ENCODE measurements at regions of chr5 and their contacts with region 1.

Region 1: GRCh38 chr5:154610321-154611154 is 132.5 kb upstream of the HAND1 start:
- DNase-seq: peak; percentile 62
- H3K4me3 ChIP-seq: peak overlapping the region in 2 of 3 experiments; percentile 19 to 20
- H3K27ac ChIP-seq: no peak overlapping the region
- H3K4me1 ChIP-seq: peaks cover 4% of the 10 kb centered on the region
- H3K27me3 ChIP-seq: peaks cover 22 to 39% of the 10 kb centered on the region in 2 experiments
- CTCF ChIP-seq: peak; percentile 83 to 91
- POLR2A ChIP-seq: no peak

Region 2: DNA sequence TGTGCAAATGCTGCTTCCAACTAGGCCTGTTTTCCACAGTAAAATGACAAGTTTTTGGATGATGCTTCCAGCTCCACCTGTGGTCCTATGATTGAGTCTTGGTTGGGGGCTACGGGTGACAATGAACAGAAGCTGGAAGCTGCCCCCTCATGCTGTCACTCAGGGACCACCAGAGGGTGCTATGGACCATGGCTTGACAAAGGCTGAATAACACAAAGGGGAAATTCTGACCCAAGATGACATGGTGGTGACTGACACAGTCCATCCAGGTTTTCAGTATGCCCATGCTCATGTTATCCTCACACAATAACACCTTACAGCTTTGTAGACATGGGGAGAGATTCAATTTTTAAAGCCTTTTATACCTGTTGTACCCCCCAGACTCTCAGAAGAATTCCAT is 188.7 kb before region 1 on chr5:
- CTCF ChIA-PET with region 1: interaction called, 9 read pairs
- POLR2A ChIA-PET with region 1: no interaction called
- dilution Hi-C with region 1: no loop called
- intact Hi-C with region 1: loop called (anchors 1 kb)
- DNase-seq: peak; percentile 33
- H3K4me3 ChIP-seq: no peak overlapping the region
- H3K27ac ChIP-seq: no peak overlapping the region
- H3K4me1 ChIP-seq: no peaks in the 10 kb centered on the region
- H3K27me3 ChIP-seq: no peaks in the 10 kb centered on the region
- CTCF ChIP-seq: peak; percentile 56 to 62
- POLR2A ChIP-seq: no peak

Region 3: DNA sequence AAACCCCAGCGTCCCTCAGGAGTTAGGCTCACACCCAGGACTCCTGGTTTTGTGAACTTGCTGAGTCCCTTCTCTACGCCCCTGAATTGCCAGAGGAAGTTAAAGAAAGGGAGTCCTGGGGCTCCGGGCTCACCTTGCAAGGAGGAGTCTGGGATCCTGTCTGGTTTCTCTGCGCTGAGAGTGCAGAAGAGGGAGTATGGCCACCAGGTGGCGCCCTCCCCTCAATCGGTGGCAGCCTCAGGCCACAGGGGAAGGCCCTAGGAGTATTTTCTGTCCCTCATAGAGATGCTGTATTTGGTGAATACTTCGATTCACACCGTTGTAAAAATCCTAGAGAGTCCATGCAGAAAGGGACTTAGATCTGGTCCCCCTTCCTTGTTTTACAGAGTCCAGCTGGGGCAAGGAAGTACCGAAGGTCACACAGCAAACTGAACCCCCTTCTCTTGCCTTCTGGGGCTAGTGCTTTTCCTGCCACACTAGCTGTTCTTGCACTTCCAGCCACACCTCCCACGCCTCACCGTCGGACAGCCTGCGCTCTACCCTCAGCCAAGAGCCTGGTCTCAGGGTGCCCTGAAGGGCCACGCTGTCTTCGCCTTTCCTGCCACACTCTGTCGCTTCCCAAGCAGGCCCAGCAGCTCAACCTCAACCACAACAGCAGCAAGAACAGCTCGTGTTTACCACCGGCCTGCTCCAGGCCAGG is 142.7 kb before region 1 on chr5:
- CTCF ChIA-PET with region 1: interaction called, 16 read pairs
- POLR2A ChIA-PET with region 1: no interaction called
- dilution Hi-C with region 1: no loop called
- intact Hi-C with region 1: loop called (anchors 1 kb)
- DNase-seq: peak; percentile 56
- H3K4me3 ChIP-seq: no peak overlapping the region
- H3K27ac ChIP-seq: no peak overlapping the region
- H3K4me1 ChIP-seq: no peaks in the 10 kb centered on the region
- H3K27me3 ChIP-seq: peaks cover 31 to 35% of the 10 kb centered on the region in 2 experiments
- CTCF ChIP-seq: peak; percentile 90 to 91
- POLR2A ChIP-seq: no peak

Region 4: GRCh38 chr5:154541553-154541952 is 69.0 kb before region 1 on chr5:
- CTCF ChIA-PET with region 1: no interaction called
- POLR2A ChIA-PET with region 1: no interaction called
- dilution Hi-C with region 1: no loop called
- intact Hi-C with region 1: no loop called
- DNase-seq: no peak
- H3K4me3 ChIP-seq: no peak overlapping the region
- H3K27ac ChIP-seq: no peak overlapping the region
- H3K4me1 ChIP-seq: no peaks in the 10 kb centered on the region
- H3K27me3 ChIP-seq: peaks cover 0 to 2% of the 10 kb centered on the region in 2 experiments
- CTCF ChIP-seq: no peak
- POLR2A ChIP-seq: no peak

Region 5: GRCh38 chr5:154663424-154663823 is 52.9 kb after region 1 on chr5:
- CTCF ChIA-PET with region 1: no interaction called
- POLR2A ChIA-PET with region 1: no interaction called
- dilution Hi-C with region 1: no loop called
- intact Hi-C with region 1: no loop called
- DNase-seq: no peak
- H3K4me3 ChIP-seq: no peak overlapping the region
- H3K27ac ChIP-seq: no peak overlapping the region
- H3K4me1 ChIP-seq: no peaks in the 10 kb centered on the region
- H3K27me3 ChIP-seq: no peaks in the 10 kb centered on the region
- CTCF ChIP-seq: no peak
- POLR2A ChIP-seq: no peak

Measured in endothelial cell of umbilical vein (primary cell).